ENCODE measurements at regions of chr11 and their contacts with region 1.

Region 1: GRCh38 chr11:29448246-29448877 is 568.5 kb downstream of the KCNA4 start:
- DNase-seq: peak; percentile 54
- H3K4me3 ChIP-seq: no peak overlapping the region
- H3K27ac ChIP-seq: no peak overlapping the region
- H3K4me1 ChIP-seq: peaks cover 24% of the 10 kb centered on the region
- H3K27me3 ChIP-seq: no peaks in the 10 kb centered on the region
- CTCF ChIP-seq: peak; percentile 28 to 56
- POLR2A ChIP-seq: no peak

Region 2: GRCh38 chr11:29490951-29491350 is 42.6 kb after region 1 on chr11:
- CTCF ChIA-PET with region 1: no interaction called
- POLR2A ChIA-PET with region 1: no interaction called
- dilution Hi-C with region 1: no loop called
- intact Hi-C with region 1: no loop called
- DNase-seq: no peak
- H3K4me3 ChIP-seq: no peak overlapping the region
- H3K27ac ChIP-seq: no peak overlapping the region
- H3K4me1 ChIP-seq: no peaks in the 10 kb centered on the region
- H3K27me3 ChIP-seq: no peaks in the 10 kb centered on the region
- CTCF ChIP-seq: no peak
- POLR2A ChIP-seq: no peak

Region 3: DNA sequence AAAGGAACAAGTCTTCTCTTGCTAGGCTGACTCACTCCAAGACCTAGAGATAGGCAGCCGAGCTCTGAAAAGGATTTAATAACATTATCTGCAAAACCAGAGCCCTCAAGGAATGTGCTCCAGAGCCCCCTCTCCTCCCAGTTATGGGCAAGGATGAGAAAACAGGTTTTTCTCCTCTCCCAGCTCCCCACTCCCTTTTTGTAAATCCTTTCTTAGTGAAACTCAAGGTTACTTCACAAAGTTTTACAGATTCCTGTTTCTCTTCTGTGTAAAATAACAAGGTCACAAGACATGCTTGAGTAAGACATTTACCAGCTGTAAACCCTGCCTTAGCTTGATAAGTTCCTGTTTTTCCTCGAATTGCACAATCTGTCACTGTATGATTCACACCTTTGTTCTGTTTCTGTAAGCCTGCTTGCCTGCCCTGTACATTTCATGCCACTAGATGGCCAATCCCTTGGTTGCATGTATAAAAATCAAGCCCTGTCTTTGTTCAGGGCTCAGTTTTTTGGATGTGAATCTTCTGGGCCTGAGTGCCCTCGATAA is 79.1 kb after region 1 on chr11:
- CTCF ChIA-PET with region 1: interaction called, 7 read pairs
- POLR2A ChIA-PET with region 1: no interaction called
- dilution Hi-C with region 1: no loop called
- intact Hi-C with region 1: loop called (anchors 2 kb)
- DNase-seq: peak; percentile 67
- H3K4me3 ChIP-seq: no peak overlapping the region
- H3K27ac ChIP-seq: no peak overlapping the region
- H3K4me1 ChIP-seq: no peaks in the 10 kb centered on the region
- H3K27me3 ChIP-seq: no peaks in the 10 kb centered on the region
- CTCF ChIP-seq: peak; percentile 25 to 46
- POLR2A ChIP-seq: no peak

Region 4: GRCh38 chr11:29634248-29634647 is 185.9 kb after region 1 on chr11:
- CTCF ChIA-PET with region 1: interaction called, 34 read pairs
- POLR2A ChIA-PET with region 1: no interaction called
- dilution Hi-C with region 1: no loop called
- intact Hi-C with region 1: loop called (anchors 1 kb)
- DNase-seq: peak; percentile 29
- H3K4me3 ChIP-seq: no peak overlapping the region
- H3K27ac ChIP-seq: no peak overlapping the region
- H3K4me1 ChIP-seq: no peaks in the 10 kb centered on the region
- H3K27me3 ChIP-seq: no peaks in the 10 kb centered on the region
- CTCF ChIP-seq: no peak
- POLR2A ChIP-seq: no peak

Region 5: DNA sequence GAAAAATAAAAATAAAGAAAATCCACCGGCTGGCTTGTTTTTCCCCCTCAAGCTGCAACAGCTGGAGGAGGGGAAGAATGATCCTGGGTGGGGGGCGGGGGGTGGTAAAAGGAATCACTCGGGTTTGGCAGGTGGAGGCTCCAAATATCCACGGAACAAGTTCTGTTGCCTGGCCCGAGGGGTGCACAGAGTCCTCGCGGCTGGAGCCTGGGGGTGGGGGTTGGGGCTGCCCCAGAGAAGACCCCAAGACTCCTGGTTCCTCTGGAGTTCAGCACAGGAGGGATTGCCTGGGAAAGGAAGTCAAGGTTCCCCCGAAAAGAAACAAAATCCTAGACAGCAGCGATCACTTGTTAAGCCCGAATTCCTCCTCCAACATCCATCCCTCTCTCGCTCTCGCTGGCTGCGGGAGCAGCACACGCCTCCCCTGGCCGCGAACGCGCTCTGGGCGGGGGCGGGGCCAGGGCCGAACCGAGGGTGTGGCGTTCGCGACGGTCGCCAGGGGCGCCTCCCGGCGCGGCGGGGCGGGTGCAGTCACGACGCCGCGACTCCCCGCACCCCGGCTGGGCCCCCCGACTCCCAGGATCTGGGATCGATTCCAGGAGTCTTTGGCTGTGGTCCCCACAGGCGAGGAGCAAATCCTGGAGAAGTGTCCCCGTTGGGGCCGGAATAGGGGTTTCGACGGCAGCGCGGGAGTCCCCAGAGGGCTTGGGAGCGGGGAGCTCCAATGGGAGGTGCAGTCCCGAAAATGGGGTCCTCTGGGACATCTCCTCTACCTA is 568.4 kb after region 1 on chr11 and contains the start of gene KCNA4:
- CTCF ChIA-PET with region 1: no interaction called
- POLR2A ChIA-PET with region 1: no interaction called
- dilution Hi-C with region 1: no loop called
- intact Hi-C with region 1: loop called (anchors 10 kb)
- DNase-seq: no peak
- H3K4me3 ChIP-seq: no peak within 1 kb of the TSS
- H3K27ac ChIP-seq: no peak within 1 kb of the TSS
- H3K4me1 ChIP-seq: no peaks in the 10 kb centered on the region
- H3K27me3 ChIP-seq: peaks cover 29 to 46% of the 10 kb centered on the region in 2 experiments
- CTCF ChIP-seq: no peak
- POLR2A ChIP-seq: no peak
- total RNA-seq, gene KCNA4: not detected in 2 replicates

Region 6: GRCh38 chr11:30196400-30197206 is 748.2 kb after region 1 on chr11:
- CTCF ChIA-PET with region 1: interaction called, 43 read pairs
- POLR2A ChIA-PET with region 1: no interaction called
- dilution Hi-C with region 1: no loop called
- intact Hi-C with region 1: loop called (anchors 1 kb)
- DNase-seq: peak; percentile 54
- H3K4me3 ChIP-seq: no peak overlapping the region
- H3K27ac ChIP-seq: no peak overlapping the region
- H3K4me1 ChIP-seq: no peaks in the 10 kb centered on the region
- H3K27me3 ChIP-seq: no peaks in the 10 kb centered on the region
- CTCF ChIP-seq: peak; percentile 71 to 82
- POLR2A ChIP-seq: no peak